ENCODE measurements at regions of chr9 and their contacts with region 1.

Region 1: GRCh38 chr9:94847486-94847885 is 121.0 kb downstream of the AOPEP start:
- DNase-seq: no peak
- ATAC-seq: no peak
- H3K4me3 ChIP-seq: no peak overlapping the region
- H3K27ac ChIP-seq: no peak overlapping the region
- H3K4me1 ChIP-seq: peaks cover 0 to 14% of the 10 kb centered on the region in 2 experiments; a peak in 2 of 4 replicates
- H3K27me3 ChIP-seq: no peaks in the 10 kb centered on the region
- CTCF ChIP-seq: no peak
- POLR2A ChIP-seq: no peak
- RAD21 ChIP-seq: no peak

Region 2: GRCh38 chr9:94900222-94901018 is 52.9 kb after region 1 on chr9:
- CTCF ChIA-PET with region 1: no interaction called
- POLR2A ChIA-PET with region 1: no interaction called
- RAD21 ChIA-PET with region 1: no interaction called
- intact Hi-C with region 1: loop called (anchors 10 kb)
- DNase-seq: no peak
- ATAC-seq: no peak
- H3K4me3 ChIP-seq: no peak overlapping the region
- H3K27ac ChIP-seq: no peak overlapping the region
- H3K4me1 ChIP-seq: peaks cover 0 to 3% of the 10 kb centered on the region in 2 experiments; a peak in 1 of 4 replicates
- H3K27me3 ChIP-seq: no peaks in the 10 kb centered on the region
- CTCF ChIP-seq: no peak
- POLR2A ChIP-seq: no peak
- RAD21 ChIP-seq: no peak

Measured in HCT116 (cell line).